ENCODE measurements at regions of chr12 and their contacts with region 1.

Region 1: GRCh38 chr12:12474931-12475795 is 87.5 kb downstream of the DUSP16 start:
- DNase-seq: peak in 3 of 9 donors; percentile 22 to 49 (median 37)
- ATAC-seq: peak; percentile 84
- H3K4me3 ChIP-seq: peak overlapping the region; percentile 7
- H3K4me3 Mint-ChIP-seq: peak overlapping the region in 9 of 10 donors; percentile 11 to 76 (median 43)
- H3K27ac ChIP-seq: peak overlapping the region; percentile 39
- H3K27ac Mint-ChIP-seq: peak overlapping the region; percentile 72 to 95 (median 91)
- H3K4me1 ChIP-seq: peaks cover 7 to 17% of the 10 kb centered on the region in 2 donors
- H3K4me1 Mint-ChIP-seq: peaks cover 10 to 72% (median 42%) of the 10 kb centered on the region in 7 donors
- H3K27me3 ChIP-seq: no peaks in the 10 kb centered on the region
- H3K27me3 Mint-ChIP-seq: no peaks in the 10 kb centered on the region

Region 2: GRCh38 chr12:12384571-12385340 is 90.4 kb before region 1 on chr12:
- CTCF ChIA-PET with region 1: no interaction called
- POLR2A ChIA-PET with region 1: interaction called, 5 read pairs
- intact Hi-C with region 1: loop called in 1 of 2 experiments (anchors 2 kb)
- DNase-seq: peak in 1 of 9 donors; percentile 34
- ATAC-seq: peak; percentile 56
- H3K4me3 ChIP-seq: no peak overlapping the region
- H3K4me3 Mint-ChIP-seq: peak overlapping the region in 5 of 10 donors; percentile 5 to 88 (median 30)
- H3K27ac ChIP-seq: no peak overlapping the region
- H3K27ac Mint-ChIP-seq: peak overlapping the region in 7 of 9 donors; percentile 46 to 98 (median 62)
- H3K4me1 ChIP-seq: peaks cover 15 to 57% of the 10 kb centered on the region in 2 donors
- H3K4me1 Mint-ChIP-seq: peaks cover 11 to 64% (median 43%) of the 10 kb centered on the region in 7 donors
- H3K27me3 ChIP-seq: no peaks in the 10 kb centered on the region
- H3K27me3 Mint-ChIP-seq: no peaks in the 10 kb centered on the region

Region 3: DNA sequence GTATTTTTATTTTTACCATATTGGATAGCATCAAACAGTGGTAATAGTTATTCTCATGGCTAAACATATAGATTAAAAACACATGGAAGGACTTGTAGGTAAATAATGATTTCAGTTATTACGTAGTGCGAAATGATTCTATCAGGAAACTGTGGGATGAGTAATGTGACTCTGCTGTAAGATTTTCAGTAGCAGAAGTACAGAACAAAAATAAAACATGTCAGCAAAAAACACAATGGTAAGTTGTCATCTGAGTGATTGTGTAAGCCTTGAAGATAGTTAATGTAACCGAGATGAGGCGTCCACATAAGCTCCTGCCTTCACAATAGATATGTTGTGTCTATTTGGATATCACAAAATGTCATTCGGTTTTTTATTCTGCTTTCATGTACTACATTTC is 18.5 kb before region 1 on chr12:
- CTCF ChIA-PET with region 1: interaction called, 3 read pairs
- POLR2A ChIA-PET with region 1: interaction called, 3 read pairs
- intact Hi-C with region 1: loop called in 1 of 2 experiments (anchors 2 kb)
- DNase-seq: no peak
- ATAC-seq: peak; percentile 82
- H3K4me3 ChIP-seq: no peak overlapping the region
- H3K4me3 Mint-ChIP-seq: peak overlapping the region in 4 of 10 donors; percentile 7 to 57 (median 30)
- H3K27ac ChIP-seq: peak overlapping the region; percentile 24
- H3K27ac Mint-ChIP-seq: peak overlapping the region in 8 of 9 donors; percentile 10 to 92 (median 50)
- H3K4me1 ChIP-seq: no peaks in the 10 kb centered on the region
- H3K4me1 Mint-ChIP-seq: peaks cover 9 to 51% (median 19%) of the 10 kb centered on the region in 7 donors
- H3K27me3 ChIP-seq: no peaks in the 10 kb centered on the region
- H3K27me3 Mint-ChIP-seq: no peaks in the 10 kb centered on the region